Mammary epithelial cell (primary cell): ENCODE measurements at regions of chr4 and their contacts with region 1.

Region 1: GRCh38 chr4:184417802-184418511 is 56.4 kb downstream of the IRF2 start:
- DNase-seq: peak; percentile 99
- H3K4me3 ChIP-seq: peak overlapping the region in 2 of 3 experiments; percentile 3 to 12
- H3K27ac ChIP-seq: peak overlapping the region; percentile 89
- H3K4me1 ChIP-seq: peaks cover 29% of the 10 kb centered on the region
- H3K27me3 ChIP-seq: no peaks in the 10 kb centered on the region
- CTCF ChIP-seq: peak; percentile 6 to 41

Region 2: DNA sequence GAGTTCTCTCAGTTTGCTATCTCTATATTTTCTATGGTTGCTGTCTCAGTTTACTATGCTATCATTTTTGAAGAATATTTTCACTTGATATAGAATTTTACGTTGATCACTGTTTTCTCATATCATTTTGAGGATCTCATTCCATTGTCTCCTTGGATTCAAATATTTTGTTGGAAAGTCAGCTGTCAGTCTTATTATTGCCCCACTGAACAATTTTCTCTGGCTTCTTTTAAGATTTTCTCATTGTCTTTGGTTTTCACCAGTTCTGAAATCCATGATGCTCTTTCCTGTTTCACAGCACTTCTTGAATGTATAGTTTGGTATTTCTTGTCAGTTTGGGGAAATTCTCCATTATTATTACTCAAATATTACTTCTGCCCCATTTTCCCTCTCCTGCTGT is 281.4 kb before region 1 on chr4:
- CTCF ChIA-PET with region 1: no interaction called
- dilution Hi-C with region 1: no loop called
- in situ Hi-C with region 1: no loop called
- intact Hi-C with region 1: no loop called
- DNase-seq: no peak
- H3K4me3 ChIP-seq: no peak overlapping the region
- H3K27ac ChIP-seq: no peak overlapping the region
- H3K4me1 ChIP-seq: no peaks in the 10 kb centered on the region
- H3K27me3 ChIP-seq: no peaks in the 10 kb centered on the region
- CTCF ChIP-seq: no peak

Region 3: GRCh38 chr4:184287697-184288255 is 130.2 kb before region 1 on chr4:
- CTCF ChIA-PET with region 1: no interaction called
- dilution Hi-C with region 1: no loop called
- in situ Hi-C with region 1: no loop called
- intact Hi-C with region 1: loop called (anchors 5 kb)
- DNase-seq: peak; percentile 50
- H3K4me3 ChIP-seq: no peak overlapping the region
- H3K27ac ChIP-seq: no peak overlapping the region
- H3K4me1 ChIP-seq: peaks cover 8% of the 10 kb centered on the region
- H3K27me3 ChIP-seq: no peaks in the 10 kb centered on the region
- CTCF ChIP-seq: peak; percentile 4 to 47

Region 4: DNA sequence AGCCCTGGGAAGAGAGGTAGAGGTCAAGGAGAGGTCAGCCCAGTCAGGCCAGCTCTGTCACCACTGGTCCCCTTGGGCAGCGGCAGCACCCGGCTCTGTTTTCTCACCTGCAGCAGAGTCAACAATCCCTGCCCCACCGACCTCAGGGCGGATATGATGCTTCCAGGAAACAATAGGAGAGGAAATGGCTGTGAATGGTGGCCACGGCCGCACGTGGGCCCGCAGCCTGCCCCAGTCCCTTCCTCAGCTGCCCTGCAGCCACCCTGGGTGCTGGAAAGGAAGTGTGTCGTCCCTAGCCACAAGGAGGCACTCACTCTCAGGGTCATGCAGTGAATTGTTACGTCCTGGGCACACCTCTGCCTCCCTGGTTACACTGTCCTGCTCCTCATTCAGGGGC is 107.8 kb before region 1 on chr4:
- CTCF ChIA-PET with region 1: no interaction called
- dilution Hi-C with region 1: no loop called
- in situ Hi-C with region 1: no loop called
- intact Hi-C with region 1: no loop called
- DNase-seq: no peak
- H3K4me3 ChIP-seq: no peak overlapping the region
- H3K27ac ChIP-seq: no peak overlapping the region
- H3K4me1 ChIP-seq: peaks cover 5% of the 10 kb centered on the region
- H3K27me3 ChIP-seq: no peaks in the 10 kb centered on the region
- CTCF ChIP-seq: peak in 1 of 2 donors; percentile 8

Region 5: GRCh38 chr4:184329659-184330400 is 88.1 kb before region 1 on chr4:
- CTCF ChIA-PET with region 1: no interaction called
- dilution Hi-C with region 1: no loop called
- in situ Hi-C with region 1: no loop called
- intact Hi-C with region 1: loop called (anchors 2 kb)
- DNase-seq: peak; percentile 85
- H3K4me3 ChIP-seq: no peak overlapping the region
- H3K27ac ChIP-seq: peak overlapping the region; percentile 83
- H3K4me1 ChIP-seq: peaks cover 37% of the 10 kb centered on the region
- H3K27me3 ChIP-seq: no peaks in the 10 kb centered on the region
- CTCF ChIP-seq: no peak